Activated CD8-positive, alpha-beta memory T cell treated with anti-CD3 and anti-CD28 coated beads, Interleukin-2, amount 10 ng/mL, durations not matched to agents 7 days and 5 days (primary cell): ENCODE measurements at regions of chr18 and their contacts with region 1.

Region 1: DNA sequence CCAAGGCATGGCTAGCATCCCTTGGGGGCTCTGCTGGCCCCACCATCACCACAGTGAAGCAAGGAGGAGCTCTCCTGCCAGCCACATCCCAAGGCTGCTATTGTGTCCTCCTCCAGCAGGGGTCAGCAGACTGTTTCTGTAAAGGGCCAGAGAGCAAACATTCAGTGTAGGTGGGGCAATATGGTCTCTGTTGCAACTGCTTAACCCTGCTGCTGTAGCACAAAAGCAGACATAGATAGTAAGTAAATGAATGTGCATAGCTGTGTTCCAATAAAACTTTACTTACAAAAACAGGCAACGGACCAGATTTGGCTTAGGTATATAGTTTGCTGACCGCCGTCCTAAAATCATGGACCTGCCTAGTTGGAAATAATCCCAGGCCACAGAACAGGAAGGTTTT is 36.4 kb upstream of the ZBTB7C start:
- DNase-seq: peak; percentile 83
- ATAC-seq: peak; percentile 79
- H3K4me3 Mint-ChIP-seq: no peak overlapping the region
- H3K27ac Mint-ChIP-seq: no peak overlapping the region
- H3K4me1 Mint-ChIP-seq: no peaks in the 10 kb centered on the region
- H3K27me3 Mint-ChIP-seq: peaks cover 37% of the 10 kb centered on the region

Region 2: GRCh38 chr18:47772374-47773248 is 672.9 kb before region 1 on chr18:
- CTCF ChIA-PET with region 1: interaction called, 10 read pairs
- DNase-seq: peak; percentile 71
- ATAC-seq: peak; percentile 65
- H3K4me3 Mint-ChIP-seq: no peak overlapping the region
- H3K27ac Mint-ChIP-seq: no peak overlapping the region
- H3K4me1 Mint-ChIP-seq: peaks cover 7% of the 10 kb centered on the region
- H3K27me3 Mint-ChIP-seq: peaks cover 4% of the 10 kb centered on the region

Region 3: GRCh38 chr18:48230467-48231113 is 214.9 kb before region 1 on chr18:
- CTCF ChIA-PET with region 1: interaction called, 25 read pairs
- DNase-seq: peak; percentile 53
- ATAC-seq: no peak
- H3K4me3 Mint-ChIP-seq: no peak overlapping the region
- H3K27ac Mint-ChIP-seq: no peak overlapping the region
- H3K4me1 Mint-ChIP-seq: peaks cover 34% of the 10 kb centered on the region
- H3K27me3 Mint-ChIP-seq: peaks cover 15% of the 10 kb centered on the region

Region 4: GRCh38 chr18:48430150-48430549 is 15.4 kb before region 1 on chr18:
- CTCF ChIA-PET with region 1: interaction called, 10 read pairs
- DNase-seq: no peak
- ATAC-seq: no peak
- H3K4me3 Mint-ChIP-seq: no peak overlapping the region
- H3K27ac Mint-ChIP-seq: no peak overlapping the region
- H3K4me1 Mint-ChIP-seq: no peaks in the 10 kb centered on the region
- H3K27me3 Mint-ChIP-seq: peaks cover 38% of the 10 kb centered on the region

Region 5: GRCh38 chr18:48455555-48456478 is 10.3 kb after region 1 on chr18:
- CTCF ChIA-PET with region 1: interaction called, 25 read pairs
- DNase-seq: peak; percentile 59
- ATAC-seq: peak; percentile 77
- H3K4me3 Mint-ChIP-seq: no peak overlapping the region
- H3K27ac Mint-ChIP-seq: no peak overlapping the region
- H3K4me1 Mint-ChIP-seq: peaks cover 21% of the 10 kb centered on the region
- H3K27me3 Mint-ChIP-seq: peaks cover 51% of the 10 kb centered on the region

Region 6: DNA sequence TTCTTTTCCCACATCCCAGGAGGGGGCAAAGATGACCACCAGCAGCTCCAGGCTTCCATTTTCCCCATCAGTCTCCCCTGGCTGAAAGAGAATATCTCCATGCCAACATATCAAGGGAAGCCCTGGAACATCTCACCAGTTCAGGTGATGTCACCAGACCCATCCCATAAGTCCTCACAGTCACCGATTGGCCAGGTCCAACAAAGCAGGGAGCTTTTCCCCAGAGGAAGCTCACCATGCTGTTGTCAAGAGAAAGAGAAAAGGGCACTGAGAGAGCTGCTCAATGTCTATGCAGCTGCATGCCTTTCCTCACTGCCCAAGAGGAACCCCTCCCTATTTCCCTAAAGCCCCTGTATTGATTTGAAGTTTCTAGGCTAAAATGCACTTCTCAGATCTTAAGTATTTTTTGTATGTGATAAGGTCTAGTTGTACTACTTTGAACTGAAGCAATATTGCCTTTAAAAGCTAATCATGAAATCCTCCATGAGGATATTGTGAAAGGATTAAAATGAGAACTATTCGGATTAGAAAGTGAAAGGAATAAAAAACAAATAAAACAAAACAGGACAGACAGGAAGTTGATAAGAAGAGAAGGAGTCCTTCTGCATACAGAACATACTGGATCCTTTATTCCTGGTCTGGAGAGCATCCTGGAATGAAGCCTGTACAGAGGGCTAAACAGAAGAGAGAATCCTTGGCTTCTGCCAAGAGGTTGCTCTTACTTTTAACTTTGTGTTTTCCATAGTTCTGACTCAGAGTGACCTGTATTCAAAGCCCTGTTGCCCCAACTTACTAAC is 48.1 kb after region 1 on chr18:
- CTCF ChIA-PET with region 1: no interaction called
- DNase-seq: no peak
- ATAC-seq: no peak
- H3K4me3 Mint-ChIP-seq: no peak overlapping the region
- H3K27ac Mint-ChIP-seq: no peak overlapping the region
- H3K4me1 Mint-ChIP-seq: no peaks in the 10 kb centered on the region
- H3K27me3 Mint-ChIP-seq: peaks cover 47% of the 10 kb centered on the region